ENCODE measurements at regions of chr9 and their contacts with region 1.

Region 1: GRCh38 chr9:128370826-128371621 is at the start of gene URM1:
- DNase-seq: peak; percentile 97
- H3K4me3 Mint-ChIP-seq: peak within 1 kb of the TSS; percentile 92
- H3K27ac Mint-ChIP-seq: peak within 1 kb of the TSS; percentile 92
- H3K4me1 Mint-ChIP-seq: peaks cover 28% of the 10 kb centered on the region
- H3K27me3 Mint-ChIP-seq: no peaks in the 10 kb centered on the region
- total RNA-seq, gene URM1: 44.4 to 45.2 TPM

Region 2: GRCh38 chr9:128322404-128323211 is 48.4 kb before region 1 on chr9 and contains the starts of genes COQ4 and TRUB2:
- CTCF ChIA-PET with region 1: no interaction called
- intact Hi-C with region 1: loop called (anchors 1 kb)
- DNase-seq: peak; percentile 95
- H3K4me3 Mint-ChIP-seq: peak within 1 kb of the TSS; percentile 90
- H3K27ac Mint-ChIP-seq: peak within 1 kb of the TSS; percentile 94
- H3K4me1 Mint-ChIP-seq: peaks cover 22% of the 10 kb centered on the region
- H3K27me3 Mint-ChIP-seq: no peaks in the 10 kb centered on the region
- total RNA-seq, gene COQ4: 27.8 to 29.6 TPM
- total RNA-seq, gene TRUB2: 28.0 to 29.4 TPM

Region 3: GRCh38 chr9:128504485-128505413 is 133.7 kb after region 1 on chr9 and contains the start of gene GLE1:
- CTCF ChIA-PET with region 1: no interaction called
- intact Hi-C with region 1: loop called (anchors 2 kb)
- DNase-seq: peak; percentile 96
- H3K4me3 Mint-ChIP-seq: peak within 1 kb of the TSS; percentile 92
- H3K27ac Mint-ChIP-seq: peak within 1 kb of the TSS; percentile 91
- H3K4me1 Mint-ChIP-seq: peaks cover 26% of the 10 kb centered on the region
- H3K27me3 Mint-ChIP-seq: no peaks in the 10 kb centered on the region
- total RNA-seq, gene GLE1: 48.7 to 51.6 TPM

Region 4: GRCh38 chr9:128771745-128772519 is 400.9 kb after region 1 on chr9 and contains the start of gene ZER1:
- CTCF ChIA-PET with region 1: no interaction called
- intact Hi-C with region 1: loop called (anchors 5 kb)
- DNase-seq: peak; percentile 95
- H3K4me3 Mint-ChIP-seq: peak within 1 kb of the TSS; percentile 95
- H3K27ac Mint-ChIP-seq: peak within 1 kb of the TSS; percentile 90
- H3K4me1 Mint-ChIP-seq: peaks cover 24% of the 10 kb centered on the region
- H3K27me3 Mint-ChIP-seq: no peaks in the 10 kb centered on the region
- total RNA-seq, gene ZER1: 9.9 to 11.0 TPM

Region 5: DNA sequence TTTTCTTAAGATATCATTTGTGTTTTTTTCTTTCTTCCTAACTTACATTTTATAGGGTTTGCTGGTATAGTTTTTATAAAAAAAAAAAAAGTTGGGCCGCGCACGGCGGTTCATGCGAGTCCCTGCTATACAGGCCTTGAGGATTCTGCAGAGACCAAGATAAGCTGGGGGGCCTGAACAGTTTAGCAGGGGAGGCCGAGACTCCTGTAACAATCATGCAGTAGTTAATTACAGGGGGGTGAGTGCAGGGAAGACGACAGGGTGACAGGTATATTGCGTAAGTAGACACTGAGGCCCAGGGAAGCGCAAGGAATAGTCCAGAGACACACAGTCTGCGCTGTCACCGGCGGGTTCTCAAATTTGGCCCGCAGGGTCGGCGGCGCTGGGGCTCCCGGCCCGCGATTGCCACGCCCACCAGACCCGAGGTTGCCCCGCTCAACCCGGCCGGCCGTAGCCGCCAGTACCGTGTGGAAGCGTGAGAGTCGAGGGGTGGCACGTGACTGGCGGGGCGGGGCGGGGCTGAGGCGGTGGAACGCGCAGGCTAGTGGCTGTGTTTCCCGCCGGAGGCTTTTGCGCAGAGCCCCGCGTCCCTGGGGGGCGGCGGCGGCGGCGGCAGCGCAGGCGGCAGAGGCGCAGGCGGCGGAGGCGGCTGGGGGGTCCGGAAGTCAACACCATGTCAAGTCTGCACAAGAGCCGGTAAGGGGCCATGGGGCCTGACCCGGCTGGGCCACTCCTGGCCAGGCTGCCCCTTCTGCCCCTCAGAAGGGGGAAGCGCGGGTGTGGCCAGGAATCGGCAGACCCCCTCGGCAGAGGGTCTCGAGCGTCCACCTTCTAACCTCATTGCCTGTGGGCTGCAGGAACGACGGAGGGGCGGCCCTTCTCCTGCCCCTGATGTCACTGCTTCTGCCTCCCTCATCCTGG is 415.9 kb after region 1 on chr9 and contains the start of gene TBC1D13:
- CTCF ChIA-PET with region 1: no interaction called
- intact Hi-C with region 1: loop called (anchors 1 kb)
- DNase-seq: peak; percentile 91
- H3K4me3 Mint-ChIP-seq: peak within 1 kb of the TSS; percentile 90
- H3K27ac Mint-ChIP-seq: peak within 1 kb of the TSS; percentile 81
- H3K4me1 Mint-ChIP-seq: peaks cover 26% of the 10 kb centered on the region
- H3K27me3 Mint-ChIP-seq: no peaks in the 10 kb centered on the region
- total RNA-seq, gene TBC1D13: 8.3 to 9.0 TPM